Caco-2 (cell line): ENCODE measurements at regions of chr20 and their contacts with region 1.

Region 1: DNA sequence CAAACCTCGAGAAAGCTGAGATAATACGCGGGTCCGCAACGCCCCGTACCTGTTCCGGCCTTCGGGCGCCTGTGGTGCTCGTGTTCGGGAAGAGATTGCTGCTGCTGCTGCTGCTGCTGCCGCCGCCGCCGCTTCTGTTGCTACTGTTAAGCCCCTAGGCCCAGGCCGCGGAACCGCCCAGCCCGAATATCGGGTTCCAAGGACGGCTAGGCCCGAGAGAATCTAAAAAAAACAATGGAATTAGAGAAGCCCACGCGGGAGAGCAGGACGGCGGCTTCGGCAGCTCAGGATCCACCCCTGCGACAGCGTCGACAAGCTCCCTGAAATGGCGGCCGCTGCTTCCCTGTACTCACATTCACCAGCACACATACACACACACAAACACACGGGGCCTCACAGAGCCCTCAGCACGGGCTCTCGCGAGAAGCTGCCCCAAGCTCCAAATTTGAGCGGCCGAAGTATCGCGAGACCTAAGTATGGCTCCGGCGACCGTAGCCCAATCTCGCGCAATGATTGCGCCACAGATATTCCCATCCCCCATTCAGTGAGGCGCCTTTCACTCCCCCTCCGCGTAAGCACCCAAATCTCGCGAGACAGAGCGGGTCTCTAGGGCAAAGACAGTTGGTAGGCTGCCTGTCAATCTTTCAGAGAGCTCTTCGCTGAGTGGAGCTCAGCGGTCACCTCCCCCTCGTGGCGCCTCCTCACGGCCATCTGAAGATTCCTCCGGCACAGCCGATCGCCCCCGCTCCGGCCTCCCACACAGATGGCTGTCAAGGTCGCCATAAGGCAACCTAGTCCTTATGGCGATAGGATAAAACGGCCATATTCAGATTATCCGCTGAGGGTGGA is at the start of gene RBM39:
- DNase-seq: peak; percentile 100
- H3K4me3 ChIP-seq: peak within 1 kb of the TSS; percentile 77
- H3K4me3 Mint-ChIP-seq: peak within 1 kb of the TSS; percentile 80
- H3K27ac Mint-ChIP-seq: peak within 1 kb of the TSS; percentile 96
- H3K4me1 ChIP-seq: peaks cover 31% of the 10 kb centered on the region
- H3K4me1 Mint-ChIP-seq: peaks cover 34% of the 10 kb centered on the region
- H3K27me3 ChIP-seq: no peaks in the 10 kb centered on the region
- H3K27me3 Mint-ChIP-seq: no peaks in the 10 kb centered on the region
- CTCF ChIP-seq: peak; percentile 52 to 65
- total RNA-seq, gene RBM39: 750 and 777 TPM in 2 replicates

Region 2: GRCh38 chr20:35454881-35455609 is 287.1 kb before region 1 on chr20 and contains the start of gene CEP250:
- CTCF ChIA-PET with region 1: no interaction called
- POLR2A ChIA-PET with region 1: interaction called, 27 read pairs
- intact Hi-C with region 1: no loop called
- DNase-seq: peak; percentile 100
- H3K4me3 ChIP-seq: peak within 1 kb of the TSS; percentile 50
- H3K4me3 Mint-ChIP-seq: peak within 1 kb of the TSS; percentile 93
- H3K27ac Mint-ChIP-seq: peak within 1 kb of the TSS; percentile 100
- H3K4me1 ChIP-seq: peaks cover 5% of the 10 kb centered on the region
- H3K4me1 Mint-ChIP-seq: peaks cover 29% of the 10 kb centered on the region
- H3K27me3 ChIP-seq: no peaks in the 10 kb centered on the region
- H3K27me3 Mint-ChIP-seq: no peaks in the 10 kb centered on the region
- CTCF ChIP-seq: no peak
- total RNA-seq, gene CEP250: 117 and 137 TPM in 2 replicates

Region 3: GRCh38 chr20:35699127-35699975 is 42.8 kb before region 1 on chr20 and contains the starts of genes NFS1 and ROMO1:
- CTCF ChIA-PET with region 1: interaction called, 3 read pairs
- POLR2A ChIA-PET with region 1: interaction called, 46 read pairs
- intact Hi-C with region 1: no loop called
- DNase-seq: peak; percentile 95 to 98
- H3K4me3 ChIP-seq: peak within 1 kb of the TSS; percentile 93
- H3K4me3 Mint-ChIP-seq: peak within 1 kb of the TSS; percentile 91
- H3K27ac Mint-ChIP-seq: peak within 1 kb of the TSS; percentile 85
- H3K4me1 ChIP-seq: peaks cover 22% of the 10 kb centered on the region
- H3K4me1 Mint-ChIP-seq: peaks cover 35% of the 10 kb centered on the region
- H3K27me3 ChIP-seq: no peaks in the 10 kb centered on the region
- H3K27me3 Mint-ChIP-seq: no peaks in the 10 kb centered on the region
- CTCF ChIP-seq: peak; percentile 32 to 52
- total RNA-seq, gene NFS1: 69.8 and 77.1 TPM in 2 replicates
- total RNA-seq, gene ROMO1: 354 and 357 TPM in 2 replicates

Region 4: DNA sequence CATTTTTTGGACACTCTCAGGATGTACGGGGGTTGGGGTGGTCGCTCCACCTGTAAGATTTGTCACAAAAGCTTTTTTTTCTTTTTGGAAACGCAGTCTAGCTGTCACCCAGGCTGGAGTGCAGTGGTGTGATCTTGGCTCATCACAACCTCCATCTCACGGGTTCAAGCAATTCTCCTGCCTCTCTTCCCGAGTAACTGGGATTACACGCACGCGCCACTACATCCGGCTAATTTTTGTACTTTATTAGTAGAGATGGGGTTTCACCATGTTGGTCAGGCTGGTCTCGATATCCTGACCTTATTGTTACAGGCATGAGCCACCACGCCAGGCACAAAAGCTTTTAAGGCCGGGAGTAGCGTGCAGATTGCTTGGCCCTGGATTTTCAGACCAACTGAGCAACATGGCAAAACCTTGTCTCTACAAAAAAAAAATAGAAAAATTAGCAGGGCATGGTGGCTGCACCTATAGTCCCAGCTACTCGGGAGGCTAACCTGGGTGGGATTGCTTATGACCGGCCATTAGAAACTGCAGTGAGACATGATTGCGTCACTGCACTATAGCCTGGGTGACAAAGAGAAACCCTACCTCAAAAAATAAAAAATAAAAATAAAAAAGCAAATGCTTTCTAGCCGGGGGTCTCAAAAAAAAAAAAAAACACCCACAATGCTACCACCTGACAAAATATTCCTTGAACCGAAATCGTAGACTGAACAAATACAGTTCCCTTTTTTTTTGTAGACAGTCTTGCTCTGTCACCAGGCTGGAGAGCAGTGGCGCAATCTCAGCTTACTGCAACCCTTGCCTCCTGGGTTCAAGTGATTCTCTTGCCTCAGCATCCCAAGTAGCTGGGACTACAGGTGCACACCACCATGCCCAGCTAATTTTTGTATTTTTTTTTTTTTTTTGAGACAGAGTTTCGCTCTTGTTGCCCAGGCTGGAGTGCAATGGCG is 15.1 kb before region 1 on chr20:
- CTCF ChIA-PET with region 1: interaction called, 12 read pairs
- POLR2A ChIA-PET with region 1: interaction called, 79 read pairs
- intact Hi-C with region 1: loop called (anchors 1 kb)
- DNase-seq: peak; percentile 14 to 39
- H3K4me3 ChIP-seq: no peak overlapping the region
- H3K4me3 Mint-ChIP-seq: peak overlapping the region; percentile 33
- H3K27ac Mint-ChIP-seq: peak overlapping the region; percentile 71
- H3K4me1 ChIP-seq: peaks cover 31% of the 10 kb centered on the region
- H3K4me1 Mint-ChIP-seq: peaks cover 38% of the 10 kb centered on the region
- H3K27me3 ChIP-seq: no peaks in the 10 kb centered on the region
- H3K27me3 Mint-ChIP-seq: no peaks in the 10 kb centered on the region
- CTCF ChIP-seq: no peak

Region 5: DNA sequence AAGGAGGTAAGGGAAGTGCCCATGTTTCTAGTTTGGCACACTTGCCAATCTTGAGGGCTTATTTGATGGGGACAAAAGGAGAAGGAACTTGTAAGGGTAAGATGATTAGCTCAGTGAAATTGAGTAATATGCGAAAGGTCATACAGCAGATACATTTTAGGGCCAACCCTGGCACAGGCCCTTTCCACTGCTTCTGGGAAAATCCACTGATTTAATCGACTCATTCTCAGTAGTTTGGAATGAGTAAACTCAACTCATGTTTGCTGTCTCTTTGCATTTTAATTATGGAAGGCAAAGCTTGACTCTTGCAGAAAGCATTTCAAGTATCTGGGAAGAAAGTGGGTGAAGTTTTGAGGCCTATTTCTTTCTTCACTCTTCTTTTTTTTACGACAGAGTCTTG is 49.7 kb after region 1 on chr20:
- CTCF ChIA-PET with region 1: no interaction called
- POLR2A ChIA-PET with region 1: interaction called, 16 read pairs
- intact Hi-C with region 1: no loop called
- DNase-seq: no peak
- H3K4me3 ChIP-seq: no peak overlapping the region
- H3K4me3 Mint-ChIP-seq: no peak overlapping the region
- H3K27ac Mint-ChIP-seq: peak overlapping the region; percentile 1
- H3K4me1 ChIP-seq: no peaks in the 10 kb centered on the region
- H3K4me1 Mint-ChIP-seq: peaks cover 10% of the 10 kb centered on the region
- H3K27me3 ChIP-seq: no peaks in the 10 kb centered on the region
- H3K27me3 Mint-ChIP-seq: no peaks in the 10 kb centered on the region
- CTCF ChIP-seq: no peak

Region 6: GRCh38 chr20:35883778-35884540 is 141.8 kb after region 1 on chr20:
- CTCF ChIA-PET with region 1: interaction called, 23 read pairs
- POLR2A ChIA-PET with region 1: interaction called, 27 read pairs
- intact Hi-C with region 1: loop called (anchors 1 kb)
- DNase-seq: peak; percentile 88
- H3K4me3 ChIP-seq: no peak overlapping the region
- H3K4me3 Mint-ChIP-seq: peak overlapping the region; percentile 13
- H3K27ac Mint-ChIP-seq: peak overlapping the region; percentile 68
- H3K4me1 ChIP-seq: peaks cover 14% of the 10 kb centered on the region
- H3K4me1 Mint-ChIP-seq: peaks cover 7% of the 10 kb centered on the region
- H3K27me3 ChIP-seq: no peaks in the 10 kb centered on the region
- H3K27me3 Mint-ChIP-seq: no peaks in the 10 kb centered on the region
- CTCF ChIP-seq: peak; percentile 94 to 96